ENCODE measurements at regions of chr6 and their contacts with region 1.

Region 1: GRCh38 chr6:24910961-24911712 is 24.6 kb downstream of the RIPOR2 start:
- DNase-seq: peak in 6 of 9 donors; percentile 37 to 67 (median 56)
- ATAC-seq: peak; percentile 60
- H3K4me3 ChIP-seq: peak overlapping the region; percentile 41
- H3K4me3 Mint-ChIP-seq: peak overlapping the region; percentile 92 to 97 (median 96)
- H3K27ac ChIP-seq: peak overlapping the region; percentile 75
- H3K27ac Mint-ChIP-seq: peak overlapping the region; percentile 88 to 99 (median 97)
- H3K4me1 ChIP-seq: peaks cover 88 to 93% of the 10 kb centered on the region in 2 donors
- H3K4me1 Mint-ChIP-seq: peaks cover 88 to 98% (median 97%) of the 10 kb centered on the region in 7 donors
- H3K27me3 ChIP-seq: no peaks in the 10 kb centered on the region
- H3K27me3 Mint-ChIP-seq: no peaks in the 10 kb centered on the region

Region 2: DNA sequence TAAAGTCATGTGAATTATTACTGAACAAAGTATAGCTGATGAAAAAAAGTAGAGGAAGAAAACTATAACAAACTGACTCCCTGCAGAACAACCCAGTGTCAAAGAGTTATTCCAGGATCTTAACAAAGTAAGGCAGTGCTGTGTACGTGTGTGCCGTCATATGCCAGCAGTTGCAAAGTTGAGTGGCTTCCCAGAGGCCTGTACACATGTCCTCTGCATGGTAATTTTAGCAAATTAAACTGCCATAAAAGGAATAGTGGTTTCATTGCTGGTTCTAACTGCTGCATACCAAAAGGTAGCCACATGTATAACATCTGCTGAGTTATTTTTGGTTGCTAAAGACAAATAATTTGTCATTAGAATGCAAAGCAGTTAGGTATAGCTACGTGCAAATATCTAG is 20.1 kb before region 1 on chr6:
- CTCF ChIA-PET with region 1: interaction called, 3 read pairs
- POLR2A ChIA-PET with region 1: interaction called, 14 read pairs
- intact Hi-C with region 1: loop called in 1 of 2 experiments (anchors 2 kb)
- DNase-seq: no peak
- ATAC-seq: no peak
- H3K4me3 ChIP-seq: no peak overlapping the region
- H3K4me3 Mint-ChIP-seq: peak overlapping the region in 9 of 10 donors; percentile 11 to 97 (median 48)
- H3K27ac ChIP-seq: peak overlapping the region; percentile 60
- H3K27ac Mint-ChIP-seq: peak overlapping the region in 8 of 9 donors; percentile 30 to 98 (median 88)
- H3K4me1 ChIP-seq: peaks cover 56 to 72% of the 10 kb centered on the region in 2 donors
- H3K4me1 Mint-ChIP-seq: peaks cover 58 to 97% (median 90%) of the 10 kb centered on the region in 7 donors
- H3K27me3 ChIP-seq: no peaks in the 10 kb centered on the region
- H3K27me3 Mint-ChIP-seq: no peaks in the 10 kb centered on the region

Region 3: GRCh38 chr6:24927985-24928745 is 17.0 kb after region 1 on chr6:
- CTCF ChIA-PET with region 1: interaction called, 53 read pairs
- POLR2A ChIA-PET with region 1: interaction called, 644 read pairs
- intact Hi-C with region 1: loop called (anchors 1 to 2 kb)
- DNase-seq: peak in 1 of 9 donors; percentile 55
- ATAC-seq: no peak
- H3K4me3 ChIP-seq: peak overlapping the region; percentile 89
- H3K4me3 Mint-ChIP-seq: peak overlapping the region; percentile 83 to 100 (median 98)
- H3K27ac ChIP-seq: peak overlapping the region; percentile 85
- H3K27ac Mint-ChIP-seq: peak overlapping the region; percentile 84 to 99 (median 93)
- H3K4me1 ChIP-seq: peaks cover 47 to 72% of the 10 kb centered on the region in 2 donors
- H3K4me1 Mint-ChIP-seq: peaks cover 69 to 83% (median 73%) of the 10 kb centered on the region in 7 donors
- H3K27me3 ChIP-seq: no peaks in the 10 kb centered on the region
- H3K27me3 Mint-ChIP-seq: peaks cover 0 to 2% (median 0%) of the 10 kb centered on the region in 5 donors

Region 4: DNA sequence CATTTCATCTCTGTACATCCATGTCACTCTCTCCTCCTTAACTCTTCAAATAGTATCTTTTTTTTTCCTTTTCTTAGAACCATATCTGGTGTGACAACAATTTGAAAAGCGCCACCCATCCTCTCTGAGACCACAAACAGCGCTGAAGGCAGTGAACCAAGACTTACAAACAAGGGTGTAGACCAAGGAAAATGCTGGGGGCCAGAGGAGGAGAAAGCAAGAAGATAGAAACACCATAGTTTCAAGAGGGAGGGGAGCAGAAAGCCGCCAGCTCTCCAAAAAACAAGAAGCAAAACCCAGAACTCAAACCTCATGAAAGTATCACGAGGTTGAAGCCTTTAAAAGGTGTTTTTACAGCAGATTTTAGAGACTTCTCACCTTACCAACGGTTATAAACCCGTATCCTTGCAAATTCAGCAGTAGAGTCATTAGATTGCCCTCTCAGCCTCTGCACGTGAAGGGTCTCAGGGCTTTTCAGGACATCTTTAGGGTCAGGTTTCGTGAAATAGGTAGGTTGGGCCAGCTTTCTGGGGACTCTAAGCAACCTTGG is 38.0 kb after region 1 on chr6:
- CTCF ChIA-PET with region 1: interaction called, 4 read pairs
- POLR2A ChIA-PET with region 1: interaction called, 57 read pairs
- intact Hi-C with region 1: loop called in 1 of 2 experiments (anchors 1 kb)
- DNase-seq: peak in 7 of 9 donors; percentile 67 to 93 (median 83)
- ATAC-seq: peak; percentile 72
- H3K4me3 ChIP-seq: peak overlapping the region; percentile 50
- H3K4me3 Mint-ChIP-seq: peak overlapping the region; percentile 71 to 86 (median 76)
- H3K27ac ChIP-seq: peak overlapping the region; percentile 75
- H3K27ac Mint-ChIP-seq: peak overlapping the region; percentile 92 to 98 (median 95)
- H3K4me1 ChIP-seq: peaks cover 62 to 68% of the 10 kb centered on the region in 2 donors
- H3K4me1 Mint-ChIP-seq: peaks cover 63 to 91% (median 75%) of the 10 kb centered on the region in 7 donors
- H3K27me3 ChIP-seq: no peaks in the 10 kb centered on the region
- H3K27me3 Mint-ChIP-seq: no peaks in the 10 kb centered on the region

Region 5: GRCh38 chr6:24960991-24961475 is 49.9 kb after region 1 on chr6:
- CTCF ChIA-PET with region 1: interaction called, 3 read pairs
- POLR2A ChIA-PET with region 1: interaction called, 11 read pairs
- intact Hi-C with region 1: no loop called
- DNase-seq: peak in 6 of 9 donors; percentile 46 to 70 (median 60)
- ATAC-seq: peak; percentile 80
- H3K4me3 ChIP-seq: peak overlapping the region; percentile 14
- H3K4me3 Mint-ChIP-seq: peak overlapping the region; percentile 46 to 81 (median 72)
- H3K27ac ChIP-seq: peak overlapping the region; percentile 64
- H3K27ac Mint-ChIP-seq: peak overlapping the region; percentile 44 to 97 (median 93)
- H3K4me1 ChIP-seq: peaks cover 70 to 74% of the 10 kb centered on the region in 2 donors
- H3K4me1 Mint-ChIP-seq: peaks cover 59 to 100% (median 90%) of the 10 kb centered on the region in 7 donors
- H3K27me3 ChIP-seq: no peaks in the 10 kb centered on the region
- H3K27me3 Mint-ChIP-seq: no peaks in the 10 kb centered on the region

Region 6: DNA sequence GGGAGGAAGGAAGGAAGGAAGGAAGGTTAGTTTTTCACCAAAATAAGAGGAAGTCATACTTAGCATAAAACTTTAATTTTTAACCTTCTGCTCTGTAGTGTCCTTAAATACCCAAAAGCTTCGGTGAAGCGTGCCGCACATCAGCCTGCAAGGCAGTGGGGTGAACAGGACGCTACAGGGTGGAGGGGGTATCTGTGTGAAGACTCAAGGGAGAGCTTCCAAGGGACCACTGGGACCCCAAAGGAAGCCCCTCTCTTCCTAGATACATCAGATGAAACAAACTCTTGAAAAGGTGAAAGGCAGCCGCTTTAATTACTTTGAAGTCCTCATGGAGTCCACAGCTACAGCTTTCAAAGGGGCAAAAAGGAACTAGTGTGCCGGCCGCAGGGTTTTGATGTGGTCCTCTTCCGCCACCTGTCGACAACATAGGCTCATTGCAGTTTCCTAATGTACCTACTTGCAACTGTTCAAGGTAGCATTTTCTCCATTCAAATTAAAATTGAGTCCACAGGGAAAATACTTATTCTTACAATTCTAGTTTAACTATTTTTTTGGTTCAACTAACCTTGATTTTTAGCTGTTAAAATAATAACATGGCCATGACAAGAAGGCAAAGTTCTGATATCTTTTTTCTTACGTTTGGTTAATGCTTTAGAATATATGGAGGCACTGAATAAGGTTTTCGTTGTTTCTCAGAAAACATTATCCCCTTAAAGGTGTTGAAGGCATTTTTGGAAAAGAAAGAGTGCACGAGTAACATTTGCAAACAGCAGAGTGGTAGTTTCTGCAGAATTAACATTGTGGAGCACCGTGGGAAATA is 159.6 kb after region 1 on chr6:
- CTCF ChIA-PET with region 1: no interaction called
- POLR2A ChIA-PET with region 1: no interaction called
- intact Hi-C with region 1: loop called (anchors 2 to 5 kb)
- DNase-seq: peak; percentile 54 to 85 (median 79)
- ATAC-seq: peak; percentile 99
- H3K4me3 ChIP-seq: no peak overlapping the region
- H3K4me3 Mint-ChIP-seq: peak overlapping the region in 8 of 10 donors; percentile 10 to 70 (median 50)
- H3K27ac ChIP-seq: no peak overlapping the region
- H3K27ac Mint-ChIP-seq: peak overlapping the region; percentile 43 to 92 (median 83)
- H3K4me1 ChIP-seq: peaks cover 0 to 3% of the 10 kb centered on the region in 2 donors
- H3K4me1 Mint-ChIP-seq: peaks cover 5 to 15% (median 9%) of the 10 kb centered on the region in 7 donors
- H3K27me3 ChIP-seq: no peaks in the 10 kb centered on the region
- H3K27me3 Mint-ChIP-seq: peaks cover 0 to 7% (median 0%) of the 10 kb centered on the region in 5 donors